Activated CD4-positive, alpha-beta T cell treated with anti-CD3 and anti-CD28 coated beads, Interleukin-2, amount 10 ng/mL, durations not matched to agents 24 days and 14 days (primary cell): ENCODE measurements at regions of chr19 and their contacts with region 1.

Region 1: DNA sequence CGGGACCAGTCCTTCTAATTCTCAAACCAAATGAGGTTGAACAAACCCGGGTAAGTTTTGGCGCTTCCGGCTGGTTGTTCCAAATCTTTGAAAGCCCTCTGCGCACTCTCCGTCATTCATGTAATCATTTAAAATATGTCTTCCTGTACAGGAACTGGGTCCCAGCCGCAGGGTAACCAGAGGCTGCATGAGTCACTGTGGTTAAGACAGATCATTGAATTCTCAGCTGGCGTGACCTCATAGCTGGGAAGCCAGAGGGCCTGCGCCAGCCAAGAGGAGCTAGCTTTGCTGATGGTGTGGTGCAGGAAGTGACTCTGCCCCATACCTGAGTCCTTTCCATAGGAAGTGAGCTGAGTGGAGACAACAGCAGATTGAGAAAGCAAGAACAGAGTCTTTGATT is 135.2 kb downstream of the TSHZ3 start:
- DNase-seq: peak; percentile 97
- H3K4me3 Mint-ChIP-seq: peak overlapping the region; percentile 82
- H3K27ac Mint-ChIP-seq: peak overlapping the region; percentile 97
- H3K4me1 Mint-ChIP-seq: peaks cover 27% of the 10 kb centered on the region
- H3K27me3 Mint-ChIP-seq: peaks cover 2% of the 10 kb centered on the region

Region 2: DNA sequence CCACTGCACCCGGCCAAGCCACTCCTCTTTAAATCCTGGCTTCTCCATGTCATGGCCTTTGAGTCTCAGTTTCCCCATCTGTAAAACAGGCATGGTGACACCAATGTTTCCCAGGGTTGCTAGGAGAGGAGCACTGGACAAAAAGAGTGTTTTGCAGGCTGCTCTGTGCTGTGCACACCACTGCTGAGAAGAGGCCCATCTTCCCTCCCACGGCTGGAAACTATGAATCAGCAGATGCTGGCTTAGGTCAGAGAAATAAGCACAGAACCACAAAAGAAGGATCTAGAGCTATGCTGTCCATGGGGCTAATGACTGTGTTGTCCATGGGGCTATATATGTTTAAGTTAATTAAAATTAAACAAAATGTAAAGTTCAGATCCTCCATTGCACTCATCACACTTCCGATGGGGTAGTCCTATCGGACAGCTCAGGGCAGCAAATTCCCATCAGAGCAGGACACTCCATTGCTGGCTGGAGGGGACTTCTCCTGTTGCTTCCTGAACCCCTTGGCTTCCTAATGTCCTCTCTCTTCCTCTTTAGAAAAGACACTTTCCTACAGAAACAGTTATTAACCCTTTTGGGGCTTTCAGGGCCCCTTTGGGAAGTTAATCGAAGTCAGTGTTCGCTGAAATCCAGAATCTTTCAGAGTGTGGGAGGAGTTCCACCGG is 98.1 kb after region 1 on chr19:
- intact Hi-C with region 1: loop called (anchors 1 kb)
- DNase-seq: no peak
- H3K4me3 Mint-ChIP-seq: no peak overlapping the region
- H3K27ac Mint-ChIP-seq: peak overlapping the region; percentile 55
- H3K4me1 Mint-ChIP-seq: peaks cover 3% of the 10 kb centered on the region
- H3K27me3 Mint-ChIP-seq: peaks cover 3% of the 10 kb centered on the region

Region 3: DNA sequence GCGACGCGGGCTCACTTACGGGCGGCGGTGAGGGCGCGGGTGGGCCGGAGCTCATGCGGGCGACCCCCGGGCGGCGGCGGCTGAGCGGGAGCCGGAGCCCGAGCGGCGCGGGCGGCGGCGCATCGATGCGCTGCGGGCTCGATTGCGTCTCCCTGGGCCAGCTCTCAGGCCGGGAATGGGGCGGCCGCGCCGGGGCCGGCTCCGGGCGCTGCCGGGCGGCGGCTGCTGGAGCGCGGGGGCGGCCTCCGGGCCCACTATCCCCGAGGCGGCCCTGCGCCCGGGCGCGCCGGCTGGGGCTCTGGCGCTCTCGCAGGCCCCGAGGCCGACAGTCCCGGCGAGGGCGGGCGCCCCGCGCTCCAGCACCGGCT is 136.6 kb after region 1 on chr19:
- intact Hi-C with region 1: loop called (anchors 1 kb)
- DNase-seq: peak; percentile 81
- H3K4me3 Mint-ChIP-seq: peak overlapping the region; percentile 89
- H3K27ac Mint-ChIP-seq: no peak overlapping the region
- H3K4me1 Mint-ChIP-seq: peaks cover 31% of the 10 kb centered on the region
- H3K27me3 Mint-ChIP-seq: peaks cover 69% of the 10 kb centered on the region